Gastrocnemius medialis (tissue), 4 donors: ENCODE measurements at regions of chr16 and their contacts with region 1.

Region 1: GRCh38 chr16:83215406-83216001 is 588.7 kb downstream of the CDH13 start:
- DNase-seq: no peak
- ATAC-seq: no peak
- H3K4me3 ChIP-seq: no peak overlapping the region
- H3K27ac ChIP-seq: no peak overlapping the region
- H3K4me1 ChIP-seq: peaks cover 0 to 7% of the 10 kb centered on the region in 2 donors
- H3K27me3 ChIP-seq: no peaks in the 10 kb centered on the region
- CTCF ChIP-seq: peak in 3 of 5 experiments; percentile 42 to 65 (median 50)
- POLR2A ChIP-seq: no peak

Region 2: GRCh38 chr16:82603784-82604411 is 611.6 kb before region 1 on chr16:
- in situ Hi-C with region 1: loop called in 1 of 4 experiments (anchors 25 kb)
- intact Hi-C with region 1: no loop called
- DNase-seq: peak; percentile 41 to 58
- ATAC-seq: peak; percentile 88 to 97
- H3K4me3 ChIP-seq: no peak overlapping the region
- H3K27ac ChIP-seq: no peak overlapping the region
- H3K4me1 ChIP-seq: no peaks in the 10 kb centered on the region
- H3K27me3 ChIP-seq: no peaks in the 10 kb centered on the region
- CTCF ChIP-seq: peak; percentile 57 to 81 (median 63)
- POLR2A ChIP-seq: no peak